ENCODE measurements at regions of chr13 and their contacts with region 1.

Region 1: DNA sequence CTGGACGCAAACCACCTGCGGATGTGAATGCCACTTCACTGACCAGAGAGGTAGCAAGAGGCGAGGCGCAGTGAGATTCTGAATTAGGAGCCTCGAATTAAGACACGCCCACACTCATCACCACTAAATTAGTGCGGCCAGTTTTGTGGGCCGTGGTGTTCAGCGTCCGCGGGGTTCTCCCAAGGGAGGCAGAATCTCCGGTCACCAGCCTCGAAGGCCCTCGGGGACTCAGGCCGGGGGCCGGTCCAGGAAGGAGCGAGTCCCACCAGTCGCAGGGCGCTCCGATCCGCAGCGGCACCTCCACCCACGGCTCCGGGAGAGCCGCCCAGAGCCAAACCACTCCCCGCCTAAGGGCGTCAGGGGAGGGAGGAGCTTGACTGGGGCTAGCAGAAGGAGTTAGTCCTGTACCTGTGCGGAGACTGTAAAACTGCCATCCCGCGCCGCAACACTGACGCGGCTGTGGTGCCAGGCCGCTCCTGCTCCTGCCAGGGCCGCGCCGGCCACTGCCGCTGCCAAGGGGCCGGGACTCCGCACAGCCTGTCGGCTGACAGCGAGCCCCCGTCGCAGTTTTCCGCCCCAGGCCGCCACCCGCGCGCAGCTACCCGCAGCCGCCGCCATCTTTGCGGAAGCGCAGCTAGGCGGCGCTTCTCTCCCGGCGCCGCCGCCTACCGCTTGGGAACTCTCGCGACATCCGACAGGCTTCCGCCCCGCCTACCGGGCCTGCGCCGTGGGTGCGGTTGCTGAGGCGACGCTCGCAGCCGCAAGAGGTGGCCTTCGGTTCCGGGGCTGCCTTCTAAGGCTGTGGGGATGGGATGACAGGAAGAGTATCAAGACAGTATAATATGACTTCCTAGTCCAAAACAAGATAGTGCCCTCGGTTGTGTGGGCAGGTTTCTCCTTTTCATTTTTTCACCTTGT is at the start of gene MICU2:
- DNase-seq: peak; percentile 87
- ATAC-seq: peak; percentile 98
- H3K4me3 ChIP-seq: peak within 1 kb of the TSS; percentile 87
- H3K27ac ChIP-seq: peak within 1 kb of the TSS; percentile 74
- H3K4me1 ChIP-seq: peaks cover 5% of the 10 kb centered on the region; the same call in 1 of the 2 replicates
- H3K27me3 ChIP-seq: peaks cover 8% of the 10 kb centered on the region; the same call in 1 of the 2 replicates
- CTCF ChIP-seq: no peak
- total RNA-seq, gene MICU2: 53.3 and 69.9 TPM in 2 replicates

Region 2: GRCh38 chr13:21297914-21298831 is 305.6 kb before region 1 on chr13:
- CTCF ChIA-PET with region 1: interaction called, 5 read pairs
- POLR2A ChIA-PET with region 1: no interaction called
- intact Hi-C with region 1: loop called (anchors 5 kb)
- DNase-seq: peak; percentile 87
- ATAC-seq: peak; percentile 88
- H3K4me3 ChIP-seq: peak overlapping the region; percentile 86
- H3K27ac ChIP-seq: peak overlapping the region; percentile 44
- H3K4me1 ChIP-seq: peaks cover 14% of the 10 kb centered on the region
- H3K27me3 ChIP-seq: no peaks in the 10 kb centered on the region
- CTCF ChIP-seq: peak; percentile 64

Region 3: DNA sequence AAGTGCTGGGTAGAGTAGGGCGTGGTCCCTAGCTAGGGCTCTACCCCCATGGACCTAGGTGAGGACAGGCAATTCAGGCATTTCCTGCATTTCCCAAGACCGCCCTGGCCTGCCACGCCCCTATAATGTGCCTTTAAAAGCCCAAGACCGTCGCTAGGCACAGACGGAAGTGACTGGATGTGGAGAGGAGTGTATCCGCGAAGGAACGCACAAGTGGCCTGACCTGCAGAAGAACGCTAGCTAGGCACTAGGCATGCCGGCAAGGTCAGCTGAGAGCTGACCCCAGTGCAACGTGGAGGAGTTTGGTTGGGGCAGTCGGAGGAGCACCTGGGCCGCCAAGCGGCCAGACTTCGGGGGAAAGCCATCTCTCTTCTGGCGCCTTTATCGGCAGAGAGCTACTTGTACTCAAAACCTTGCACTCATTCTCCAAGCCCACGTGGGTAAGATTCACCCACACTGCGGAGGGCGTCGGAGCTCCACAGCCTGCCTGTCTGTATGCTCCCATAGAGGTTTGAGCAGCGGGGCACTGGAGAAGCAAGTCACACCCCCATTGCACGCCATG is 437.1 kb after region 1 on chr13:
- CTCF ChIA-PET with region 1: no interaction called
- POLR2A ChIA-PET with region 1: no interaction called
- intact Hi-C with region 1: no loop called
- DNase-seq: no peak
- ATAC-seq: no peak
- H3K4me3 ChIP-seq: no peak overlapping the region
- H3K27ac ChIP-seq: no peak overlapping the region
- H3K4me1 ChIP-seq: no peaks in the 10 kb centered on the region
- H3K27me3 ChIP-seq: no peaks in the 10 kb centered on the region
- CTCF ChIP-seq: no peak

Region 4: DNA sequence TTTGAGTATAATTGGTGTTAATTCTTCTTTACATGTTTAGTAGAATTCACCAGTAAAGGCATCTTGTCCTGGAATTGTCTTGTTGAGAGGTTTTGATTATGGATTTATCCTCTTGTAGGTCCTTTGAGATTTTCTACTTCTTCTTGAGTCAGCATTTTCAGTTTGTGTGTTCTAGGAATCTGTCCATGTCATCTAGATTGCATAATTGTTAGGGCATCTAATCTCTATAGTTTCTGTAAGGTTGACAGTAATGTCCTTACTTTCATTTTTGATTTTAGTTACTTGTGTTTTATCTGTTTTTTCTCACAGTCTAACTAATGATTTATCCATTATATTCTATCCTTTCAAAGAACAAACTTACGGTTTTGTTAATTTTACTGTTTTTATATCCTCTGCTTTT is 559.1 kb after region 1 on chr13:
- CTCF ChIA-PET with region 1: no interaction called
- POLR2A ChIA-PET with region 1: no interaction called
- intact Hi-C with region 1: no loop called
- DNase-seq: no peak
- ATAC-seq: no peak
- H3K4me3 ChIP-seq: no peak overlapping the region
- H3K27ac ChIP-seq: no peak overlapping the region
- H3K4me1 ChIP-seq: no peaks in the 10 kb centered on the region
- H3K27me3 ChIP-seq: no peaks in the 10 kb centered on the region
- CTCF ChIP-seq: no peak

Region 5: GRCh38 chr13:22432690-22433089 is 828.9 kb after region 1 on chr13:
- CTCF ChIA-PET with region 1: no interaction called
- POLR2A ChIA-PET with region 1: no interaction called
- intact Hi-C with region 1: no loop called
- DNase-seq: no peak
- ATAC-seq: no peak
- H3K4me3 ChIP-seq: no peak overlapping the region
- H3K27ac ChIP-seq: no peak overlapping the region
- H3K4me1 ChIP-seq: no peaks in the 10 kb centered on the region
- H3K27me3 ChIP-seq: no peaks in the 10 kb centered on the region
- CTCF ChIP-seq: no peak

Measured in PC-3 (cell line).